ENCODE measurements at regions of chr9 and their contacts with region 1.

Region 1: GRCh38 chr9:6498982-6499381 is 86.0 kb downstream of the UHRF2 start:
- DNase-seq: no peak
- ATAC-seq: peak; percentile 37
- H3K4me3 Mint-ChIP-seq: no peak overlapping the region
- H3K27ac Mint-ChIP-seq: no peak overlapping the region
- H3K4me1 Mint-ChIP-seq: no peaks in the 10 kb centered on the region
- H3K27me3 Mint-ChIP-seq: no peaks in the 10 kb centered on the region
- CTCF ChIP-seq: no peak

Region 2: GRCh38 chr9:5863092-5863746 is 635.8 kb before region 1 on chr9:
- CTCF ChIA-PET with region 1: no interaction called
- POLR2A ChIA-PET with region 1: no interaction called
- intact Hi-C with region 1: no loop called
- DNase-seq: no peak
- ATAC-seq: no peak
- H3K4me3 Mint-ChIP-seq: no peak overlapping the region
- H3K27ac Mint-ChIP-seq: no peak overlapping the region
- H3K4me1 Mint-ChIP-seq: no peaks in the 10 kb centered on the region
- H3K27me3 Mint-ChIP-seq: no peaks in the 10 kb centered on the region
- CTCF ChIP-seq: no peak

Region 3: GRCh38 chr9:6512085-6512657 is 13.2 kb after region 1 on chr9:
- CTCF ChIA-PET with region 1: no interaction called
- POLR2A ChIA-PET with region 1: no interaction called
- intact Hi-C with region 1: no loop called
- DNase-seq: no peak
- ATAC-seq: no peak
- H3K4me3 Mint-ChIP-seq: no peak overlapping the region
- H3K27ac Mint-ChIP-seq: no peak overlapping the region
- H3K4me1 Mint-ChIP-seq: no peaks in the 10 kb centered on the region
- H3K27me3 Mint-ChIP-seq: no peaks in the 10 kb centered on the region
- CTCF ChIP-seq: no peak

Region 4: DNA sequence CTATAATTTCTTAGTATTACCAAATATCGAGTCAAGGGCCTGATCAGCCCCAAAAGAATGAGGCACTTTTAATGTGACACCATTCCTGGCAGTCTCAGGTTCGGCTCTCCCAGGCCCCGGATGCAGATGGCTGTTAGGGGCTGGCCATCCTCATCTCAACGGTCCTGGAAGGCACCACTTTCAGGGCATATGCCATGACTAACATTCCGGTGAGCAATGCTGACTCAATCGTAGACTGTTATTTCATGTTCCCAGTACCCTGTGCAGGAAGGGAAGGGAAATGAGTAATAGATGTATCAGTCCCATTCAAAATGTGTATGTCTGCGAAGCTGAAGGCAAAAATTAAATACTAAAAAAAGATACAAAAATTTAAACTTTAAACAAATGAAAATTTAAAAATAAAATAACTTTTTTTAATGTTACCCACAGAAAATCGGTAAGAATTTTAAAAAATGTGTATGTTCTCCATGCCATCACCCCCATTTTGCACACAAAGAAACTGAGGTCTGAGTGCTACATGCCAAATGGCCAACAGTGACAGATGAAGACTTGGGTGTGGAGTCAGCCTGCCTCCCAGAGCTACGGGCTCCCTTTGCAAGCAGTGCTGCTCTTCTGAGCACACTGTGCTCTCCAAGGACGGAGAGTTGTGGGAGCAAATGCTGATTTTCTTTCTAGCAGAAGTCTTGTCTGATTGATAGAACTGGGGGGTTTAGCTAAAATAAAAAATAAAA is 67.6 kb after region 1 on chr9:
- CTCF ChIA-PET with region 1: no interaction called
- POLR2A ChIA-PET with region 1: no interaction called
- intact Hi-C with region 1: loop called (anchors 5 kb)
- DNase-seq: no peak
- ATAC-seq: no peak
- H3K4me3 Mint-ChIP-seq: no peak overlapping the region
- H3K27ac Mint-ChIP-seq: no peak overlapping the region
- H3K4me1 Mint-ChIP-seq: no peaks in the 10 kb centered on the region
- H3K27me3 Mint-ChIP-seq: no peaks in the 10 kb centered on the region
- CTCF ChIP-seq: no peak

Region 5: DNA sequence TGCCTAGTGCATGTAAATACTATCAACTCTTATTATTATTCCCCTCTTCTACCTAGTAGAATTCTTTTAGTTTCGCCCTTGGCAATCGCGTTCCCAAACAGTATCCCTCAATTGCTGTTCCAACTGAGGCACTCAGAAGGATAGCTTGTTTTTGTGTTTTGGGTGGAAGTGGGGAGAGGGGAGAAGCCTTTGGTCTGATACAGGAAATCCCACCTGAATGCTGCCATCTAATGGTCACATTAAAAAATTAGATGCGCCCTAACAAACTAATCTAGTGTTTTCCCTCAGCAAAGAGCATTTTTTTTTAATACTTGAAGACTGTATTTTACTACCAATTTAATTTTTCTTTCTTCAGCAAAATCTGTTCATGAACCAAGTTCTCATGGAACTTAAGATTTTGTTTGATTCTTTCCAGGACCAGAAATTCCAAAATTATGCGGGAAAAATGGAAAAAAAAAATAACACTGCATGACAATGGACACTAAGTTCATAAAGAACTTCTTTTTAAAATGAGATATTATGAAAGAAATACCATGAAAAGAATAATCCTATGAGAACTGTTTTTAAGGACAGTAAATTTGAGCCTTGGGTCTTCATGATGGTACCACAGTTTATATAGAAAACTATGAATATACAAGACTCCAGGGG is 168.8 kb after region 1 on chr9:
- CTCF ChIA-PET with region 1: interaction called, 3 read pairs
- POLR2A ChIA-PET with region 1: no interaction called
- intact Hi-C with region 1: loop called (anchors 10 kb)
- DNase-seq: no peak
- ATAC-seq: peak; percentile 50
- H3K4me3 Mint-ChIP-seq: no peak overlapping the region
- H3K27ac Mint-ChIP-seq: no peak overlapping the region
- H3K4me1 Mint-ChIP-seq: peaks cover 7% of the 10 kb centered on the region
- H3K27me3 Mint-ChIP-seq: no peaks in the 10 kb centered on the region
- CTCF ChIP-seq: no peak

Measured in activated B cell treated with CpG ODN at 0.5 μM for 24 hours (primary cell).